A549 (cell line): ENCODE measurements at regions of chr17 and their contacts with region 1.

Region 1: GRCh38 chr17:9729034-9729650 is 62.2 kb downstream of the DHRS7C start:
- DNase-seq: peak; percentile 78 to 83
- ATAC-seq: peak; percentile 54 to 77; a peak in 4 of 6 replicates
- H3K4me3 ChIP-seq: no peak overlapping the region
- H3K27ac ChIP-seq: peak overlapping the region; percentile 62 to 84
- H3K4me1 ChIP-seq: peaks cover 13% of the 10 kb centered on the region
- CTCF ChIP-seq: peak; percentile 100
- EP300 ChIP-seq: no peak
- POLR2A ChIP-seq: no peak
- RAD21 ChIP-seq: peak; percentile 99 to 100

Region 2: GRCh38 chr17:9714801-9715200 is 14.3 kb before region 1 on chr17:
- CTCF ChIA-PET with region 1: interaction called, 15 read pairs
- POLR2A ChIA-PET with region 1: no interaction called
- DNase-seq: no peak
- ATAC-seq: 0 out of 6 replicates have a peak, but pooled peaks of 1 of the 2 experiments have one; percentile 43
- H3K4me3 ChIP-seq: no peak overlapping the region
- H3K27ac ChIP-seq: no peak overlapping the region
- H3K4me1 ChIP-seq: no peaks in the 10 kb centered on the region
- CTCF ChIP-seq: no peak
- EP300 ChIP-seq: no peak
- POLR2A ChIP-seq: no peak
- RAD21 ChIP-seq: no peak

Region 3: GRCh38 chr17:9755083-9755482 is 25.9 kb after region 1 on chr17:
- CTCF ChIA-PET with region 1: interaction called, 12 read pairs
- POLR2A ChIA-PET with region 1: no interaction called
- DNase-seq: peak in 1 of 2 experiments; percentile 29
- ATAC-seq: peak in 1 of 2 experiments; percentile 50; a peak in 2 of 6 replicates
- H3K4me3 ChIP-seq: no peak overlapping the region
- H3K27ac ChIP-seq: peak overlapping the region in 1 of 2 experiments; percentile 4; a peak in 1 of 6 replicates
- H3K4me1 ChIP-seq: no peaks in the 10 kb centered on the region
- CTCF ChIP-seq: no peak
- EP300 ChIP-seq: no peak
- POLR2A ChIP-seq: no peak
- RAD21 ChIP-seq: no peak

Region 4: DNA sequence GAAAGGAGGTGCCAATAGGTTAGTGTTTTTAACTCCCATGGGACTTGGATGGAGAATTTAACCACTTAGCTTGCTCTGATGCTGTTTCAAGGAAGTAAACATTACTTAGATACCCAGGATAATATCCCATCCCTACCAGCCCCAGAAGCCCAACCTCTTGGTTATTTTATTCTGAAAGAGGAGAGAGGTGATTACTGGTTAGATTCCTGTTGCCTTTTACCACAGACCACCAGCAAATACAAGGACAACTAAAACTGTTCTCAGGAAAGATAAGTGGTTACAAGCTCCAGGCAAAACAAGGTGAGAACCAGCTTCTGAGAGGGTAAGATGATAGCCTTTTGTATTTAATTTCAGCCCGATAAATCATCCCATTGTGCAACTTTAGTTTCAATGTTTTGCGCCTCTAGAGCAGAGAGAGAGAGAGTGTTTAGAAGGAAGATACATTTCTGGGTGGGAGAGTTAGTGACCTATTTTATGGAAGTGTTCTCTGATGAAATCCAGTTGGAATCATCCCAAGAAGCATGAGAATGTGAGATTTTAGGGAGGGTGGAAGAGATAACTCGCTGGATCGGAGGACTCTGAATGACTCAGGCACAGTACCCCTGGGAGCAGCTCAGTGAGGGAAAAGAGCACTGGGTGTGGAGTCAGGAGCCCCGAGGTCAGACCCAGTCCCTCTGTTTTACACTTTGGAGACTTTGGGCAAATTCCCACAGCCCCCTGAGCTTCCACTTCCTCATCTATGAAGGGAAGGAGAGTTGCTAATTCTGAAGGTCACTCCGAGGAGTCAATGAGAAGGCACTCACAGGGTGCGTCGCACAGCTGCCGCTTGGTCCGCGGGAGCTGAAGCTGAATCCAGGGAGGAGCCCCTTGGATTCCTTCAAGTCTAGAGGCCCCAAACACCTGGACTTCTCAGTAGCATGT is 108.7 kb after region 1 on chr17:
- CTCF ChIA-PET with region 1: interaction called, 19 read pairs
- POLR2A ChIA-PET with region 1: interaction called, 4 read pairs
- DNase-seq: peak; percentile 90 to 98
- ATAC-seq: peak; percentile 60 to 78
- H3K4me3 ChIP-seq: peak overlapping the region; percentile 1; the same call in 1 of the 3 replicates
- H3K27ac ChIP-seq: peak overlapping the region; percentile 96 to 97
- H3K4me1 ChIP-seq: peaks cover 73% of the 10 kb centered on the region
- CTCF ChIP-seq: no peak
- EP300 ChIP-seq: peak; percentile 99
- POLR2A ChIP-seq: no peak
- RAD21 ChIP-seq: peak; percentile 32 to 73; a peak in 3 of 5 replicates

Region 5: DNA sequence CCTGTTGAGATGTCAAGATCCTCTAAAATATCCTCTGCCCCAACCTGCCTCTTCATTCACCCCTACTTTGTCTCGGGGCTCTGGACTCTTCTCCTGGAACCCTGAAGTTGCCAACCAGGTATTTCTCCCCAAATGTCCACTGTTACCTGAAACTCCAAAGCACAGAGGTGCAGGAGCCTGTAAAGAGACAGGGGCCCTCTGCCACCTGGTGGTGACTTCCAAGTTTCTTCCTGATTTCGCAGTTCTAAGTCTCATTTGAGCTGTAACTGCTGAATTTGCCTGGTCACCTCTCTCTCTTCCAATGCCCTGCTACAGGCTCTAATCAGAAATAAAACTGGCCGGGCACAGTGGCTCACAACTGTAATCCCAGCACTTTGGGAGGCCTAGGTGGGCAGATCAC is 253.0 kb after region 1 on chr17:
- CTCF ChIA-PET with region 1: interaction called, 12 read pairs
- POLR2A ChIA-PET with region 1: no interaction called
- DNase-seq: peak; percentile 53
- ATAC-seq: peak; percentile 72 to 76; a peak in 4 of 6 replicates
- H3K4me3 ChIP-seq: no peak overlapping the region
- H3K27ac ChIP-seq: no peak overlapping the region
- H3K4me1 ChIP-seq: peaks cover 16% of the 10 kb centered on the region
- CTCF ChIP-seq: peak; percentile 45; the same call in 2 of the 3 replicates
- EP300 ChIP-seq: no peak
- POLR2A ChIP-seq: no peak
- RAD21 ChIP-seq: peak; percentile 65 to 66